Tibial artery (tissue), 4 donors: ENCODE measurements at regions of chr15 and their contacts with region 1.

Region 1: DNA sequence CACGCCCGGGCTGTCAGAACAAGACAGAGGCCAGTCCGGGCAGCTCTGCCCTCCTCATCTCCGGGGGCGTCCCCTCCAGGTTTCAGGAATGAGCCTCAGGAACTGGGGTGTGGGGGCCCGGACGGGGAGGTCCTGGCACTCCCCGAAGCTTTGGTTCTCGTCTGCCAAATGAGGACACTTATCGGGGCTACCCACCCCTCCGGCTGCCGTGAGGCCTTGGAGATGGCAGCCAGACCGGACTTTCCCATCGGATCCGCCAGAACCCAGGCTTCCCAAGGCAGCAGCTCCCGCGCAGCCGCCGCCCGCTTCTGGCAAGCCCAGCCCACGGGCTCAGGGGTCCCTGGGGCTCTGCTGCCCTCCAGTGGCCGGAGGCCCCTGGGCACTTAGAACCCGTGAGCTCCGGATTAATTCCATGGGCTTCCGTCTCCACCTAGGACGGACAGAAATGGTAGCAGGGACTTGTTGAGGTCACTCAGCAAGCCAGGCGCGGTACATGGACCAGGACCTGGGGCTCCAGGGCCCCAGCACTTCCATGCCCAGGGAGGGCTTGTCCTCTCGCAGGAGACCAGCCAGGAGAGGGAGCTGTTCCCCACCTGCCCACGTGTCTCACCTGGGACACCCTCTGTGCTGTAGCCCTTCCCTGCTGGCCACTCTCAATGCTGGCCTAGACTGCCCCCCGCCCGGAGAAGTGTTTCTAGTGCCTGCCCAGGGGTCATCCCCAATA is 89.4 kb downstream of the LINGO1 start:
- DNase-seq: peak; percentile 80 to 89
- H3K4me3 ChIP-seq: peak overlapping the region; percentile 32 to 52
- H3K27ac ChIP-seq: peak overlapping the region; percentile 26 to 38
- H3K4me1 ChIP-seq: peaks cover 0 to 31% (median 12%) of the 10 kb centered on the region in 4 donors
- H3K27me3 ChIP-seq: no peaks in the 10 kb centered on the region
- CTCF ChIP-seq: peak; percentile 98

Region 2: GRCh38 chr15:77014132-77015081 is 528.9 kb before region 1 on chr15:
- intact Hi-C with region 1: loop called (anchors 5 kb)
- DNase-seq: no peak
- H3K4me3 ChIP-seq: no peak overlapping the region
- H3K27ac ChIP-seq: no peak overlapping the region
- H3K4me1 ChIP-seq: peaks cover 0 to 11% (median 6%) of the 10 kb centered on the region in 4 donors
- H3K27me3 ChIP-seq: peaks cover 0 to 5% of the 10 kb centered on the region in 2 donors
- CTCF ChIP-seq: no peak

Region 3: GRCh38 chr15:77107531-77108355 is 435.6 kb before region 1 on chr15:
- intact Hi-C with region 1: loop called (anchors 5 kb)
- DNase-seq: peak; percentile 54 to 80
- H3K4me3 ChIP-seq: no peak overlapping the region
- H3K27ac ChIP-seq: peak overlapping the region in 1 of 2 donors; percentile 20
- H3K4me1 ChIP-seq: peaks cover 0 to 17% (median 15%) of the 10 kb centered on the region in 4 donors
- H3K27me3 ChIP-seq: no peaks in the 10 kb centered on the region
- CTCF ChIP-seq: peak; percentile 51 to 59

Region 4: DNA sequence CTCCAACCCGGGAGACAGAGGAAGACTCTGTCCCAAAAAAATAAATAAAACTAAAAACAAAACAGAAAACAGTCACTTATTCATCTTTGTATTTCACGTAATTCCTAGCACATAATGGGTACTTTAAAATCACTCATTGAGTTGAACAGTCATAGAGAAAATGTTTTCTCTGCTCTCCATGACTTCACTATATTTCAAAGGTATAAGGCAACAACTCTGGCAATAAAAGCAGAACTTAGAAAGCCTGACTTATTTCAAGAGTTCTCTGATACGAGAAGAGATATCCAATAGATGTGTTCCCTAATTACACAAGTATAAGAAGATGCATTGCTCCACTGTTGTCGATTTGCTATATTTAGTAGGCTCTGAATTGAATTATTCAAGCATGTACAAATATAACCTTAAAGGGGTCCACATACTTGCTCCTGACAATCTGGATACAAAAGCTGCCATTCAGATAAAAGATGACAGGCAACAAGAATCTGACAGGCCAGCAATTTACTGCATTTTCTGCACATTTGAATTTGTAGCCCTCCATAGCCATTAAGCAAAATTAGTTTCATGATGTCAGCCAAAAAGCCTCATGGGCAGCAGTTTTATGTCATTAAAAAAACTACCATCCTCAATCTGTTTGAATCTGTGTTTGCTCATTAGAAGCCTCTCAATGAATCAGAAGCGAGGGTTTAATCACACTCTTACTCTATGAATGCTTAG is 171.3 kb before region 1 on chr15:
- intact Hi-C with region 1: no loop called
- DNase-seq: no peak
- H3K4me3 ChIP-seq: no peak overlapping the region
- H3K27ac ChIP-seq: no peak overlapping the region
- H3K4me1 ChIP-seq: no peaks in the 10 kb centered on the region
- H3K27me3 ChIP-seq: no peaks in the 10 kb centered on the region
- CTCF ChIP-seq: no peak

Region 5: DNA sequence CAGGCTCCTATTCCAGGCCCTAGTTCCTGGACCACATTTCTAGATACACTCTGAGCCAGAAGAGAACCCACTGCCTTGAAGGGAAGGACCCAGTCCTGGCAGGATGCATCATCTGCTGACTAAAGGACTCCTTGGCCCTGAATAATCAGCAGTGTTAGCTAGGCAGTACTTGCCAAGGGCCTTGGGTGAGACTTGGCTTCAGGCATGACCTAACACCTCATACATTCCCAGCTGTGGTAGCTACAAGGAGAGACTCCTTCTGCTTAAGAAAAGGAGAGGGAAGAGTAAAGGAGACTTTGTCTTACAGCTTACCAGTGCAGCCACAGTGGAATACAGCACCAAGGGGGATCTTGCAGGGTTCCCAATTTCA is 149.9 kb before region 1 on chr15:
- intact Hi-C with region 1: no loop called
- DNase-seq: no peak
- H3K4me3 ChIP-seq: no peak overlapping the region
- H3K27ac ChIP-seq: no peak overlapping the region
- H3K4me1 ChIP-seq: peaks cover 0 to 13% (median 6%) of the 10 kb centered on the region in 4 donors
- H3K27me3 ChIP-seq: no peaks in the 10 kb centered on the region
- CTCF ChIP-seq: no peak

Region 6: GRCh38 chr15:78308422-78309032 is 765.2 kb after region 1 on chr15:
- intact Hi-C with region 1: no loop called
- DNase-seq: peak; percentile 47 to 48
- H3K4me3 ChIP-seq: no peak overlapping the region
- H3K27ac ChIP-seq: no peak overlapping the region
- H3K4me1 ChIP-seq: no peaks in the 10 kb centered on the region
- H3K27me3 ChIP-seq: peaks cover 0 to 63% of the 10 kb centered on the region in 2 donors
- CTCF ChIP-seq: peak; percentile 32 to 43